Uterus (tissue), 4 donors: ENCODE measurements at regions of chr2 and their contacts with region 1.

Region 1: DNA sequence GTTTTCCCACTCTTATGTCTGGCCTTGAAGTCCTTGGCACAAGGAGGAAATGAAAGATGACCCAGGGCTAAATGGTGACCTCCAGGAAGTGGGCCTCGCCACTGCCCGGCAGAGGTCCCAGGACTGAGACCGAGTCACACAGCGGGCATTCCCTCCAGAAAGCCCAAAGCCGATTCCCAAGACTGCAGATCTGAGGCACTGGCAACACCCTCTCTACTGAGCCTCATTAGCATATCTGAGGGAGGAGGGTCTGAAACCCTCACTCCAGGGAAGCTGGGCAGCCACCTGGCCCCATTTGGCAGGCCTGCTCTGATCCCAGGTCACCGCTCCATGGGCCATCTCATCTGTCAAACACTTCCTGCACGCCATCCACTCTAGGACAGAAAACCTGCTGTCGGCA is 29.1 kb downstream of the FAM178B start:
- DNase-seq: no peak
- H3K4me3 ChIP-seq: no peak overlapping the region
- H3K27ac ChIP-seq: no peak overlapping the region
- H3K4me1 ChIP-seq: peaks cover 12 to 20% of the 10 kb centered on the region in 2 donors
- H3K27me3 ChIP-seq: no peaks in the 10 kb centered on the region
- CTCF ChIP-seq: no peak
- POLR2A ChIP-seq: no peak

Region 2: DNA sequence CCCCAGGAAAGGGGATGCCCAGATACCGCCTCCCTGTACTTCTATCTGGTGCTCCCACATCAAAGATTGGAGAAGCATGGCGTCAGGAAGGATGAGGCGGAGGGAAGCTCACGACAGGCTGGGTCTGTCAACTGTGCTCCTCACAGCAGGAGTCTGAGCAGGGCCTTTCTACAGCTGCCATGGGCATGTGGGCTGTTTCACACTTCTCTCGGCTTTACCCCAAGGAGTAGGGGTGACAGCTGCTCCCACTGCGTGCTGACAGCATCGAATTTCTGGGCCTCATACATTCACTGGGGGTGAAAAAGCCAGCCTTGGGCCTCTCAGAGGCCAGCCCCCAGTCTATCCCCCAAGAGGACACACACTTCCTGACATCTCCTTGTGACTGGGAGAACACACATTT is 473.2 kb before region 1 on chr2:
- intact Hi-C with region 1: no loop called
- DNase-seq: no peak
- H3K4me3 ChIP-seq: no peak overlapping the region
- H3K27ac ChIP-seq: no peak overlapping the region
- H3K4me1 ChIP-seq: no peaks in the 10 kb centered on the region
- H3K27me3 ChIP-seq: no peaks in the 10 kb centered on the region
- CTCF ChIP-seq: no peak
- POLR2A ChIP-seq: no peak

Region 3: DNA sequence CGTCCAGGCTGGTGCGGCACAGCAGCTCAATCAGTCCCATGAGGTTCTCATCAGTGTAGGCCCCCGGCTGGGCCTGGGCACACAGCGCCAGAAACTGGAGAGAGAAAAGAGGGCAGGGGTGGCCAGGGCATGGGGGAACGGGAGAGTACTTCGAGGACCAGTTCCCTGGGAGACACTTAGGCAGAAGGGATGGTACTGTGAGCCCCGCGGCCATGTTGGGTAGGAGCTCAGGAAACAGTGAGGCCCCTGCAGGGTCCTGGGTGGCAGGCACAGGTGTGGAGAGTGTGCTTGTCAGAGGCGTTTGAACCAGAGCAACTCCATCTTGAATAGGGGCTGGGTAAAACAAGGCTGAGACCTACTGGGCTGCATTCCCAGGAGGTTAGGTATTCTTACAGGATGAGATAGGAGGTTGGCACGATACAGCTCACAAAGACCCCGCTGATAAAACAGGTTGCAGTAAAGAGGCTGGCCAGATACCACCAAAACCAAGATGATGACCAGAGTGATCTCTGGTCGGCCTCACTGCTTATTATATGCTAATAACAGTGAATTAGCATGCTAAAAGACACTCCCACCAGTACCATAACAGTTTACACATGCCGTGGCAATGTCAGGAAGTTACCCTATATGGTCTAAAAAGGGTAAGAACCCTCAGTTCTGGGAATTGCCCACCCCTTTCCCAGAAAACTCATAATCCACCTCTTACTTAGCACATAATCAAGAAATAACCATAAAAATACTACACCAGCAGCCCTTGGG is 35.5 kb before region 1 on chr2:
- intact Hi-C with region 1: loop called (anchors 2 kb)
- DNase-seq: no peak
- H3K4me3 ChIP-seq: no peak overlapping the region
- H3K27ac ChIP-seq: no peak overlapping the region
- H3K4me1 ChIP-seq: no peaks in the 10 kb centered on the region
- H3K27me3 ChIP-seq: no peaks in the 10 kb centered on the region
- CTCF ChIP-seq: no peak
- POLR2A ChIP-seq: no peak

Region 4: GRCh38 chr2:97011977-97012565 is 54.8 kb after region 1 on chr2:
- intact Hi-C with region 1: no loop called
- DNase-seq: no peak
- H3K4me3 ChIP-seq: no peak overlapping the region
- H3K27ac ChIP-seq: no peak overlapping the region
- H3K4me1 ChIP-seq: no peaks in the 10 kb centered on the region
- H3K27me3 ChIP-seq: no peaks in the 10 kb centered on the region
- CTCF ChIP-seq: peak; percentile 26 to 52 (median 41)
- POLR2A ChIP-seq: no peak